Transverse colon (tissue), 4 donors: ENCODE measurements at regions of chr1 and their contacts with region 1.

Region 1: DNA sequence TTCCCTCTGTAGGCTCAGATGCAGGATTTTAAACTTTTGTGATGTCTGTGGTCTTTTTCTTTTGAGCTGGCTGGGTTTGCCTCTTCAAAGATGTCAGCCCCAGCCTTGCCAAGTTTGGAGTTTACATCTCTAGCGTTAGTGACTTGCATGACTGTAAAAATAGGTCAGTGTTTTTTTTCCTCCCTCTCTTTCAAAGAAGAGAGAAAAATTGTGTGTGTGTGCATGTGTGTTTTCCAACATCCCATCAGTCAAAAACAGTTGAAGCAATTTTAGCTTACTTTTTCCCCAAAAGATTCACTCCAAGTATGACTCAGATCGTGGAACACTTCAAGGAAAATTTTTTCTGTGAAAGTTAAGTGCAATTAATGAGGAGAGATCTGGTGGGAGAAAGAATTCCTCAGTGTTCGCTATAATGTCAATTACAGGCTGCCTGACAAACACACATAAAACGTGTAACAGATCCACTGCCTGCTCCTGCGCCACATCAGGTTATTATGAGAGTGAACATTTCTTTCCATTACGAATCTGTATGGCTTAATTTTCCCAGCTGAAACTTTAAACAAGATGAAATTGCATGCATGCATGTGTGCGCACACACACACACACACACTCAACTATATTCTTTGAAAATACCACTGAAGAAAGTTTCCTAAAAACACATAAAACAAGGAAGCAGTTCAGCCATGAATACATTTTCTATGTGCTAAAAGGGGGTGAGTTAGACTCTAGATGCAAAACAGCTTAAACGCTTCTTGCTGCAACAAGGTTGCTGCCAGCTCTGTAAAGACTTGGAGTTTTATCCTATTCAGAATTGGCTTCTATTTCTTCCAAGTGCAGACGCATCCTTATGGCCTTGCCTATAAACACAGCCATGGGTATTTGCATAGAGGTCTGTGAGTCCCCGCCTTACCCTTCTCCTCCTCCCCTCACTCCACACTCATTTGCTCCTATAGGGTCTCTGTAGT is 55.5 kb downstream of the TLR5 start:
- DNase-seq: no peak
- H3K4me3 ChIP-seq: no peak overlapping the region
- H3K27ac ChIP-seq: peak overlapping the region; percentile 62 to 87 (median 76)
- H3K4me1 ChIP-seq: peaks cover 0 to 16% (median 7%) of the 10 kb centered on the region in 4 donors
- H3K27me3 ChIP-seq: no peaks in the 10 kb centered on the region
- CTCF ChIP-seq: no peak
- EP300 ChIP-seq: no peak
- POLR2A ChIP-seq: no peak

Region 2: GRCh38 chr1:223123011-223123610 is 35.5 kb after region 1 on chr1:
- in situ Hi-C with region 1: no loop called
- intact Hi-C with region 1: loop called (anchors 5 kb)
- DNase-seq: no peak
- H3K4me3 ChIP-seq: peak overlapping the region in 3 of 4 donors; percentile 10 to 44 (median 19)
- H3K27ac ChIP-seq: no peak overlapping the region
- H3K4me1 ChIP-seq: peaks cover 0 to 7% (median 1%) of the 10 kb centered on the region in 4 donors
- H3K27me3 ChIP-seq: no peaks in the 10 kb centered on the region
- CTCF ChIP-seq: no peak
- EP300 ChIP-seq: no peak
- POLR2A ChIP-seq: no peak